Naive thymus-derived CD4-positive, alpha-beta T cell (primary cell): ENCODE measurements at regions of chr19 and their contacts with region 1.

Region 1: GRCh38 chr19:29966588-29967249 is 24.7 kb downstream of the URI1 start:
- DNase-seq: peak in 1 of 9 donors; percentile 15
- ATAC-seq: peak; percentile 42
- H3K4me3 ChIP-seq: no peak overlapping the region
- H3K4me3 Mint-ChIP-seq: peak overlapping the region in 6 of 10 donors; percentile 1 to 76 (median 49)
- H3K27ac ChIP-seq: peak overlapping the region; percentile 27
- H3K27ac Mint-ChIP-seq: peak overlapping the region in 3 of 9 donors; percentile 3 to 32 (median 5)
- H3K4me1 ChIP-seq: peaks cover 31 to 44% of the 10 kb centered on the region in 2 donors
- H3K4me1 Mint-ChIP-seq: peaks cover 41 to 97% (median 88%) of the 10 kb centered on the region in 7 donors
- H3K27me3 ChIP-seq: no peaks in the 10 kb centered on the region
- H3K27me3 Mint-ChIP-seq: no peaks in the 10 kb centered on the region

Region 2: GRCh38 chr19:29953352-29954247 is 13.1 kb before region 1 on chr19:
- CTCF ChIA-PET with region 1: interaction called, 6 read pairs
- POLR2A ChIA-PET with region 1: interaction called, 3 read pairs
- intact Hi-C with region 1: loop called in 1 of 2 experiments (anchors 2 kb)
- DNase-seq: no peak
- ATAC-seq: no peak
- H3K4me3 ChIP-seq: no peak overlapping the region
- H3K4me3 Mint-ChIP-seq: peak overlapping the region in 2 of 10 donors; percentile 29 to 50
- H3K27ac ChIP-seq: no peak overlapping the region
- H3K27ac Mint-ChIP-seq: peak overlapping the region in 3 of 9 donors; percentile 32 to 69 (median 62)
- H3K4me1 ChIP-seq: peaks cover 0 to 10% of the 10 kb centered on the region in 2 donors
- H3K4me1 Mint-ChIP-seq: peaks cover 26 to 79% (median 73%) of the 10 kb centered on the region in 7 donors
- H3K27me3 ChIP-seq: no peaks in the 10 kb centered on the region
- H3K27me3 Mint-ChIP-seq: no peaks in the 10 kb centered on the region

Region 3: DNA sequence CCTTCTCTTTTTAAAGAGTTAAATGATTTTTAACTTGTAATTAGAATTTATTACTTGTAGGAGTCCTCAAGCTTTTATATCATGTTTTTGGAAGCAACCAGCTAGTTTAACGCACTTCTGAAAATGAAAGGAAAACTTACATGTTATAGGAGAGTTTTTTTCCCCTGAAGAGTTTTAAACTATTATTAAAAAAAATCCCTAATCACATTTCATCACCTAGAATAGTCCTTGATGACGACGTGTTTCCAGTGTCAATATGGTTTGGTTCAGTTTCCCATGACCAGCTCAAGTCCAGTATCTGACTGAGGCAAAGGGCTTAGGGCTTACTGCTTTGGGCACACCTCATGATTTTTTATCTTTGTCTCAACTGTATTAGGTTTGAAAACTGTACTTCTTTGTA is 11.4 kb after region 1 on chr19:
- CTCF ChIA-PET with region 1: interaction called, 3 read pairs
- POLR2A ChIA-PET with region 1: interaction called, 3 read pairs
- intact Hi-C with region 1: loop called in 1 of 2 experiments (anchors 2 kb)
- DNase-seq: no peak
- ATAC-seq: no peak
- H3K4me3 ChIP-seq: no peak overlapping the region
- H3K4me3 Mint-ChIP-seq: peak overlapping the region in 5 of 10 donors; percentile 23 to 59 (median 39)
- H3K27ac ChIP-seq: no peak overlapping the region
- H3K27ac Mint-ChIP-seq: peak overlapping the region in 1 of 9 donors; percentile 62
- H3K4me1 ChIP-seq: peaks cover 0 to 29% of the 10 kb centered on the region in 2 donors
- H3K4me1 Mint-ChIP-seq: peaks cover 25 to 92% (median 77%) of the 10 kb centered on the region in 7 donors
- H3K27me3 ChIP-seq: no peaks in the 10 kb centered on the region
- H3K27me3 Mint-ChIP-seq: no peaks in the 10 kb centered on the region

Region 4: DNA sequence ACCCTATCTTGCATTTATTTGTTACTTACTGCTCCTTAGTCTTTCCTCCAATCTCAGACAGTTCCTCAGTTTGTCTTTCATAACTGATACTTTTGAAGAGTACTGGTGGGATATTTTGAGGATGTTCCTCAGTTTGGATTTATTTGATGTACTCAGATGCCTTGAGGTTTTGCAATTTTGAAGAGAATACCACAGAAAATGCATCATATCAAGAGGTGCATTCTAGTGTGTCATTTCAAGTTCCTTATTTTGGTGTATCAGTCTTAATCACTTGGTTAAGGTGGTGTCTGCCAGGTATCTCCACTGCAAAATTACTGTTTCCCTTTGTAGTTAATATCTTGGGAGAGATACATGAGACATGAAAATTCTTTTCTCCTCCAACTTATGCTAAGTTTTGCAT is 50.5 kb after region 1 on chr19:
- CTCF ChIA-PET with region 1: no interaction called
- POLR2A ChIA-PET with region 1: no interaction called
- intact Hi-C with region 1: no loop called
- DNase-seq: no peak
- ATAC-seq: no peak
- H3K4me3 ChIP-seq: no peak overlapping the region
- H3K4me3 Mint-ChIP-seq: no peak overlapping the region
- H3K27ac ChIP-seq: no peak overlapping the region
- H3K27ac Mint-ChIP-seq: peak overlapping the region in 2 of 9 donors; percentile 7 to 23
- H3K4me1 ChIP-seq: no peaks in the 10 kb centered on the region
- H3K4me1 Mint-ChIP-seq: peaks cover 0 to 6% (median 1%) of the 10 kb centered on the region in 7 donors
- H3K27me3 ChIP-seq: no peaks in the 10 kb centered on the region
- H3K27me3 Mint-ChIP-seq: no peaks in the 10 kb centered on the region

Region 5: GRCh38 chr19:30469774-30470173 is 503.1 kb after region 1 on chr19:
- CTCF ChIA-PET with region 1: no interaction called
- POLR2A ChIA-PET with region 1: no interaction called
- intact Hi-C with region 1: no loop called
- DNase-seq: no peak
- ATAC-seq: no peak
- H3K4me3 ChIP-seq: no peak overlapping the region
- H3K4me3 Mint-ChIP-seq: no peak overlapping the region
- H3K27ac ChIP-seq: no peak overlapping the region
- H3K27ac Mint-ChIP-seq: no peak overlapping the region
- H3K4me1 ChIP-seq: no peaks in the 10 kb centered on the region
- H3K4me1 Mint-ChIP-seq: no peaks in the 10 kb centered on the region
- H3K27me3 ChIP-seq: no peaks in the 10 kb centered on the region
- H3K27me3 Mint-ChIP-seq: peaks cover 0 to 8% (median 0%) of the 10 kb centered on the region in 5 donors